Calu3 (cell line): ENCODE measurements at regions of chr1 and their contacts with region 1.

Region 1: DNA sequence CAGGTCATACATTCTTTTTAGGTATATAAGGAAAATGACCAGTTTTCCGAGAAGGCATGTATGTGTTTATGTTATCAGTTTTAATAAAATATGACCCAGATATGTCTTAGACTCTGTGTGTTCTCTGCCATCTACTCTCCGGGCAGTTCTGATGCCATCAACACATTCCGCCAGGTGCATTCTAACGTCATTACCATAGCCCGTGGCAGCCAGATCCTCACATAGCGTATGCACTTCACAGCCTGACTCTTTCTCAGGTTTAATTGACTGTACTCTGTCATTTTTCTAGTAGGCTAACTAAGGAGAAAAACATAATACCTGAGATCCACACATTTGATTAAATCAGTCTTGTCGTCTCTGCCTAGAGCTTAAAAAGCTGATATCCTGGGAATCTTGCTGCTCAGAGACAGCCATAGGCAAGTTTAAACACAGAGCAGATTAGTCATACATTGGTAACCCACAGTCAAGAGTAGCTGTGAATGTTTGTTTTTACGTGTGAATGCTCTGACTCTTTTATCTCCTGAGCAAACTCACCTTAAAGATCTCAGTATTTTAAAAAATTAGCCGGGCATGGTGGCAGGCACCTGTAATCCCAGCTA is 175.9 kb downstream of the GREM2 start:
- DNase-seq: no peak
- H3K4me3 Mint-ChIP-seq: no peak overlapping the region
- H3K27ac Mint-ChIP-seq: no peak overlapping the region
- H3K4me1 Mint-ChIP-seq: no peaks in the 10 kb centered on the region
- H3K27me3 Mint-ChIP-seq: no peaks in the 10 kb centered on the region
- CTCF ChIP-seq: no peak

Region 2: DNA sequence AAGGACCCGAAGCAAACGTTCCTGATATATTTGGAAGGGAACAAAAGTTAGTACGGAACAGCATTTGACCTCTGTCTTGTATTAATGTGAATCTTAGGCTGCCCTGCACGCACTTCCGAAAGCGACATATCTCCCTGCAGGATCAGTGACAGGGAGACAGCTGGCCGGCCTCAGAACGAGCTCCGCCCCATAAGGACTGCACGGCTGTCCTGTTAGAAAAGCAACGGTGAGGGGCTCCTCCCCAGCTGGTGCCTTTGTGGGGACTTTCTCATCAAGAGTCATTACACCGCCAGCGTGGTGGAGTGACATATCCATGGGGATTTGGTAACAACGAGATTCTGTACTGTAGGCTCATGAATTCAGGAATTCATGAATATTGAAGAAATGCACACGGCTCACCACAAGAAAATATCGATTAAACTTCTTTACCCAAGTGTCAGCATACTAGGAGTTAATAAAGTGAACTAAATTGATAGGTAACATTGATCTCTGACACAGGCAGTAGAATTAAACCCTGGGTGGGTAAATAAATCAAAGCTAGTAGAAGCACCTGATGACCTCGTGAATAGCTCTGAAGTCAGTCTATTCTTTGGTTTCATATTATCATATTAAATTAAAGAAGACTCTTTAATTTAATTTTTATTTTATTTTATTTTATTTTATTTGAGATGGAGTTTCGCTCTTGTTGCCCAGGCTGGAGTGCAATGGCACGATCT is 184.0 kb after region 1 on chr1:
- CTCF ChIA-PET with region 1: interaction called, 10 read pairs
- intact Hi-C with region 1: no loop called
- DNase-seq: no peak
- H3K4me3 Mint-ChIP-seq: no peak overlapping the region
- H3K27ac Mint-ChIP-seq: no peak overlapping the region
- H3K4me1 Mint-ChIP-seq: no peaks in the 10 kb centered on the region
- H3K27me3 Mint-ChIP-seq: no peaks in the 10 kb centered on the region
- CTCF ChIP-seq: no peak